Ascending aorta (tissue), 2 donors: ENCODE measurements at regions of chr15 and their contacts with region 1.

Region 1: DNA sequence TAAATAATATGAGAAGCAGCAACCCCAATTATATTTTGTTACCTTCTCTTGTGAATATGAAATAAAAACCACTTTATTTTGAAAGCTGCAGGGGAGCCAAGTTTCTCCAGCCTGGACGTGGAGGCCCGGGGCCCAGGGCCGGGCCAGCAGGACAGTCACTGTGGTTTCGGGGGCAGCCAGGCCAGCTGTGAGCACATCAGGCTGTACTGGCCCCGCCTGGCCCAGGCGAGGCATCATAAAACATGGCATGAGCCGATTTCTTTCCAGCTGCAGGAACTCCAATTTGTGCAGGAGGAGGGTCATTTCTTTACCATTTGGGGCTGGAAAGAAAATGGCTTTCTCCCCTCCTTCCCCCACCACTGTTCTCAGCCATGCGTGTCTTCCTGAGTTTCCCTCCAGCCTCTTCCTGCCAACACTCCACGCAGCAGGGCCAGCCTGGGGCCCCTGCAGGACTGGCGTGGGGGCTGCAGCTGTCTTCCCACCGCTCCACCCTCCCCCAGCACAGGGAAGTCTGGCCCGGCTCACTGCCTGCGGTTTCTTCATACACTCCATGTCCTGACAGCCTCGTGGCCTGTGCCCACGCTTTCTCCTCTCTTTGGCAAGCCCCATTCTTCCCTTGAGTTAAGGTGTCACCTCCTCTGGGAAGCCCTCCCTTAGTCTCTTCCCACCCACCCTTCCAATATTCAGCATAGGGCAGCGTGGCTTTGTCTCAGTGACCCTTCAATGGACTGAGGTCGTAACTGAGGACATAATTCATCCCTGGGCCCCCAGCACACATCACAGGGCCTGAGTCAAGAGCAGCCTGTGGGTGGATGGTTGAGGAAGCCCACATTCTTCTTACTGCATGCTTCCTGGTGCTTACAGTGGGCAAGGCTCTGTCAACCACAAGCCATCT is 135.8 kb downstream of the CHSY1 start:
- DNase-seq: no peak
- H3K4me3 ChIP-seq: no peak overlapping the region
- H3K27ac ChIP-seq: no peak overlapping the region
- H3K4me1 ChIP-seq: peaks cover 4% of the 10 kb centered on the region in 2 donors
- H3K27me3 ChIP-seq: no peaks in the 10 kb centered on the region
- CTCF ChIP-seq: no peak

Region 2: GRCh38 chr15:101049856-101050622 is 66.0 kb before region 1 on chr15:
- intact Hi-C with region 1: loop called (anchors 10 kb)
- DNase-seq: peak in 1 of 2 donors; percentile 50
- H3K4me3 ChIP-seq: no peak overlapping the region
- H3K27ac ChIP-seq: no peak overlapping the region
- H3K4me1 ChIP-seq: no peaks in the 10 kb centered on the region
- H3K27me3 ChIP-seq: no peaks in the 10 kb centered on the region
- CTCF ChIP-seq: no peak